GM10248 (cell line): ENCODE measurements at regions of chr3 and their contacts with region 1.

Region 1: GRCh38 chr3:112734718-112735350 is 93.9 kb upstream of the CCDC80 start:
- DNase-seq: peak; percentile 65
- CTCF ChIP-seq: peak; percentile 51

Region 2: DNA sequence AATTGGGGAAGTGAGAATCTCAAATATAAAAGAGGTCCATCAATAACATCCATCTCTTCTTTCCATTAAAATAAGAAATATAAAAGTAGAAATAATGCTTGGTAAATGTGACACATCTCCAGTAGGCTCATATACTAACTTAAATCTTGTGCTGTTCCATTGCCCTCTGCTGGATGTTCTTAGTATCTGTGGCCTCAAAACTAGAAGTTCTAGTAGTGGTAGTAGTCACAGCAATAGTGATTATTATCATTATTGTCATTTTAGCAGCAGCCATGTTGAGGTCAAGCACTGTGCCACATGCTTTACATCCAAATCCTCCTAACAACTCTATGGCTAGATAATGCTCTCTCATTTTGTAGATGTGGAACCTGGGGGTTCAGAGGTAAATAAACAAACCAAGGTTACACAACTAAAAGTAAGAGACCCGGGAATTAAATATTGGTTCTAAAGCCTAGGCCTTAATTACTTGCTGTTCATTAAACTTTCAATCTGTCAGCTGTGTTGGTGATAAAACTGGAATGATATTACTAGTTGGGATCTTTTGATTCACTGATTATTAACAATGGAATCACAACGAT is 215.3 kb before region 1 on chr3:
- CTCF ChIA-PET with region 1: no interaction called
- POLR2A ChIA-PET with region 1: no interaction called
- DNase-seq: peak; percentile 59
- CTCF ChIP-seq: peak; percentile 62

Region 3: GRCh38 chr3:112709911-112710310 is 24.9 kb before region 1 on chr3:
- CTCF ChIA-PET with region 1: interaction called, 15 read pairs
- POLR2A ChIA-PET with region 1: no interaction called
- DNase-seq: no peak
- CTCF ChIP-seq: no peak

Region 4: DNA sequence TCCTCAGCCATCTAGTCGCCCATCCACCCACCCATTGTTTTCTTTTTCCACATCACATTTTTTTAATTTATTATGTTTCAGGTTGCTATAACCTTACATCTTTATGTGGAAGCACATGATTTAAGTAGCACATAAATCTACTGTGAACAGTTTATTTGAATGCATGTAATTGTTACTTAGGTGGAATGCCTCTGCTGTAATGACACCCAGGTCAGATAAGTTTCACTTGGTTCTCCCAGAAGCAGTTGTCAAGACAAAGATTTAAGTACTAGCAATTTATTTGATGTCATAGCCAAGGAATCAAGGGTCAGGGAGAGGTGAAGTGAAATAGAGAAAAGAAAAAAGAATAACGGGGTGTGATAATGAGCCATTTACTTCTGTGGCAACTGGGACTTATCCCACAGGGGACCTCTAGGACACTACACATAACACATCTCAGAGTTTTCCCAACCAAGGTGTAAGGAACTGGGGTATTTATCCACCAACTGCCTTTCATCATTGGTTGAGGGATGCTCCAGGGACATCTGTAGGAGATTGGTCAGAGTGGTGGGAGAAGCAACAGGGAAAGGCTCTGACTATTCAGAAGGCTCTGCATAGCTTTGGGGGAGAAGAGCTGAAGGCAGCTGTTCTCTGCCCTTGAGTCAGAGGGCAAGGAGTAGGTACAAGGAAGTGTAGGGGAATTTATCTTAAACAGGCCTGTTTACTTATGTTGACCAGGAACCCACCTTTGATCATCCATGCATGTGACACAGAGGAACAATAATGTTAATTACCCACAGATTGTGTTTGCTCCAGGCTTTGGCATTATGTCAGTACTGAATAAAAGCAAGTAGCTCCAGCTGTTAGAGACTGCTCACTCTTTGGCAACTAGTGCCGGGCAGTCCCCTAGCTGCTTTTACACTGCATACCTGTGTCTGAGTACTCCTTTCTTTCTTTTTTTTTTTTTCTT is 17.0 kb after region 1 on chr3:
- CTCF ChIA-PET with region 1: interaction called, 65 read pairs
- POLR2A ChIA-PET with region 1: no interaction called
- DNase-seq: no peak
- CTCF ChIP-seq: no peak

Region 5: DNA sequence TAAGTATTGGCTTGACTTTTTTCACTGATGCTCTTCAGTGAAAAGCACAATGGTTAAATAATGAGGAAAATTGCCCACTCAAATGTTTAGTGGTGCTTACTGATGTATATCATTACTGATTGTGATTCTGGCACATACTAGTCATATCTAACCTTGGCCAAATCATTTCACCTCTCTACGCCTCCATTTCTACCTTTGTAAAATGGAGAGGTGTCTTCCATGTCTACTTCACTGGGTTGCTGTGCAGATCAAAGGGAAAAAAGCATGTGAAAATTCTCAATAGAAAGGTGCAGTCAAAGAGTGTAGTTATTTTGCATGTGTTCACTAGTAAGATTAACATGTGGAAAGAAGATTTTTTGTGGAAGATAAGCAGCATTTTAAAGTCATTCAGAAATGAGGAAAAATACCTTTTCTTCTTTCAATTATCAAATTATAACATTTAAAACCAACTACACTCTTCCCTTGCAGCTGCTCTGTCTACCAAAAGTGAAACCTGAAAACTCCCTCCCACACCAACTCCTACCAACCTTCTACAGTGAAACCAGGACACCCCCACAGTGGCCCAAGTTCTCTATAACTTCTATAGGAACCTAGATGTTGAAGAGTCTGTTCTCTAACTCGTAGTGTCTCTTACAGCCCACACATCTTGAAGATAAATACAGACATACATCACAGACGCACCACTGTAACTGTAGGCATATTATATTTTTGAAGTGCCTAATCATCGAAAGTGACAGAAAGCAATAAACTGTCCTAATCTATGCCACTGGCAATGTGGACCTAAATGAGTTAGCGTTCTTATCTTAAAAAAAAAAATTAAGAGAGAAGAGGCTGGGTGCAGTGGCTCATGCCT is 238.7 kb after region 1 on chr3:
- CTCF ChIA-PET with region 1: interaction called, 79 read pairs
- POLR2A ChIA-PET with region 1: no interaction called
- DNase-seq: peak; percentile 42
- CTCF ChIP-seq: no peak

Region 6: DNA sequence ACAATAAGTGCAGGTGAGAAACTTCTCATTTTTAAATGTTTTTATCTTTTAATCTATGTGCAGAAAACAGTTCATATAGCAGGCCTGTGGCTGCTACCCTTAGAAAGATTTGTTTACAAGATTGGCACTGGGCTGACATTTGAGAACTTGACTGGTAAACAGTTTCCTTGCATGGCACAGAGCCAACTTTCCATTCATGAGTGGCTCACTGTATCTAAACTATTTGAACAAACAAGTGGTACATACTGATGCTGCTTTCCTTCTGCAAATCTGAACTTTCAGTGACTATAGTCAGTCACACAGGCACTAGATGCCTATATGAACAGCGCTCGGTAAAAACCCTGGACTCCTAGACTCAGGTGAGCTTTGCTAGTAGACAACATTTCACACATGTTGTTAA is 249.7 kb after region 1 on chr3:
- CTCF ChIA-PET with region 1: interaction called, 79 read pairs
- POLR2A ChIA-PET with region 1: no interaction called
- DNase-seq: no peak
- CTCF ChIP-seq: no peak

Region 7: GRCh38 chr3:113008117-113008516 is 273.3 kb after region 1 on chr3:
- CTCF ChIA-PET with region 1: interaction called, 13 read pairs
- POLR2A ChIA-PET with region 1: no interaction called
- DNase-seq: no peak
- CTCF ChIP-seq: no peak

Region 8: DNA sequence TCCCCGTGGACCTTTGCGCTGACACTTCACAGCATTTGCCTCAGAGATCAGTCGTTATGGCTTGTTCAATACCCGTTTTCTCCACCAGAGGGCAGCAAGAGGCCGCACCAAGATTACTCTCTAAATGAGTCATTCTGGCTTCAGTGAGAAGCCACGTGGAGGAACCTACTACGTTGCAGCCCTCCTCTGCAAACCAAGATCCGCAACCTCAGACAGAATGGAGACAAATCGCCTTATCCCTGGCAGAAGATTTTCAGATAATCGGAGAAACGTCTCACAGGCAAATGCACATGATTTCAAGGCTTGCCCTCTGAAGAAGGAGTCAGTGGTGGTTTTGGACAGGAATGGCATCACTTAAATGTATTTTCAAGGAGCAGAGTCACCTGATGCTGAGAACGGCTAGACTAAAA is 316.5 kb after region 1 on chr3:
- CTCF ChIA-PET with region 1: no interaction called
- POLR2A ChIA-PET with region 1: no interaction called
- DNase-seq: peak; percentile 77
- CTCF ChIP-seq: peak; percentile 69